ENCODE measurements at regions of chr6 and their contacts with region 1.

Region 1: GRCh38 chr6:84227434-84228197 is at the start of gene CEP162:
- DNase-seq: peak; percentile 93
- ATAC-seq: peak; percentile 96
- H3K4me3 Mint-ChIP-seq: peak within 1 kb of the TSS; percentile 84
- H3K27ac Mint-ChIP-seq: peak within 1 kb of the TSS; percentile 92
- H3K4me1 Mint-ChIP-seq: peaks cover 12% of the 10 kb centered on the region
- H3K27me3 Mint-ChIP-seq: peaks cover 5% of the 10 kb centered on the region
- total RNA-seq, gene CEP162: 7.2 to 7.3 TPM

Region 2: GRCh38 chr6:82247634-82248232 is 1979.9 kb before region 1 on chr6 and contains the start of gene IBTK:
- CTCF ChIA-PET with region 1: no interaction called
- POLR2A ChIA-PET with region 1: no interaction called
- intact Hi-C with region 1: loop called in 1 of 2 experiments (anchors 5 kb)
- DNase-seq: peak; percentile 92
- ATAC-seq: peak; percentile 87
- H3K4me3 Mint-ChIP-seq: peak within 1 kb of the TSS; percentile 97
- H3K27ac Mint-ChIP-seq: peak within 1 kb of the TSS; percentile 93
- H3K4me1 Mint-ChIP-seq: peaks cover 34% of the 10 kb centered on the region
- H3K27me3 Mint-ChIP-seq: no peaks in the 10 kb centered on the region
- total RNA-seq, gene IBTK: 28.6 to 29.5 TPM

Region 3: GRCh38 chr6:83292900-83293843 is 934.4 kb before region 1 on chr6:
- CTCF ChIA-PET with region 1: no interaction called
- POLR2A ChIA-PET with region 1: no interaction called
- intact Hi-C with region 1: no loop called
- DNase-seq: no peak
- ATAC-seq: peak; percentile 90
- H3K4me3 Mint-ChIP-seq: no peak overlapping the region
- H3K27ac Mint-ChIP-seq: no peak overlapping the region
- H3K4me1 Mint-ChIP-seq: peaks cover 11% of the 10 kb centered on the region
- H3K27me3 Mint-ChIP-seq: peaks cover 46% of the 10 kb centered on the region

Region 4: GRCh38 chr6:83615025-83615999 is 612.3 kb before region 1 on chr6:
- CTCF ChIA-PET with region 1: no interaction called
- POLR2A ChIA-PET with region 1: no interaction called
- intact Hi-C with region 1: loop called (anchors 5 to 10 kb)
- DNase-seq: no peak
- ATAC-seq: no peak
- H3K4me3 Mint-ChIP-seq: no peak overlapping the region
- H3K27ac Mint-ChIP-seq: no peak overlapping the region
- H3K4me1 Mint-ChIP-seq: no peaks in the 10 kb centered on the region
- H3K27me3 Mint-ChIP-seq: peaks cover 5% of the 10 kb centered on the region

Region 5: DNA sequence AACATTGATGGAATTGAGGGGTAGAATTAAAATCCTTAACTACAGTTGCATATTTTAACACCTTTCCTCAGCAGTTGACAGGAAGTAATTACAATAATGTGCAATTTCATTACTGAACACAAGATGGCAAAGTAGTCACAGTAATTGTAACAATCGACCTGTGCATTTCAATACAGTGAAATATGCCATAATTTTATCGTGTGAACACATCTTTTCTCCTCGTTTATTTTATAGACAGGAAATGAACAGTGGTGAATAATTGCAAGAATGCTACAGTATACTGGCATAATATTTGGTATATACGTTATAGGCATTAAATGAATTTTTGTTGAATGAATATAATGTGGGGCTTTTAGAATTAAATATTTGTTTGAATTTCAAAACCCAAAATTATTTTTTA is 343.1 kb before region 1 on chr6:
- CTCF ChIA-PET with region 1: interaction called, 7 read pairs
- POLR2A ChIA-PET with region 1: no interaction called
- intact Hi-C with region 1: loop called (anchors 2 kb)
- DNase-seq: no peak
- ATAC-seq: peak; percentile 74
- H3K4me3 Mint-ChIP-seq: no peak overlapping the region
- H3K27ac Mint-ChIP-seq: no peak overlapping the region
- H3K4me1 Mint-ChIP-seq: peaks cover 11% of the 10 kb centered on the region
- H3K27me3 Mint-ChIP-seq: no peaks in the 10 kb centered on the region

Region 6: DNA sequence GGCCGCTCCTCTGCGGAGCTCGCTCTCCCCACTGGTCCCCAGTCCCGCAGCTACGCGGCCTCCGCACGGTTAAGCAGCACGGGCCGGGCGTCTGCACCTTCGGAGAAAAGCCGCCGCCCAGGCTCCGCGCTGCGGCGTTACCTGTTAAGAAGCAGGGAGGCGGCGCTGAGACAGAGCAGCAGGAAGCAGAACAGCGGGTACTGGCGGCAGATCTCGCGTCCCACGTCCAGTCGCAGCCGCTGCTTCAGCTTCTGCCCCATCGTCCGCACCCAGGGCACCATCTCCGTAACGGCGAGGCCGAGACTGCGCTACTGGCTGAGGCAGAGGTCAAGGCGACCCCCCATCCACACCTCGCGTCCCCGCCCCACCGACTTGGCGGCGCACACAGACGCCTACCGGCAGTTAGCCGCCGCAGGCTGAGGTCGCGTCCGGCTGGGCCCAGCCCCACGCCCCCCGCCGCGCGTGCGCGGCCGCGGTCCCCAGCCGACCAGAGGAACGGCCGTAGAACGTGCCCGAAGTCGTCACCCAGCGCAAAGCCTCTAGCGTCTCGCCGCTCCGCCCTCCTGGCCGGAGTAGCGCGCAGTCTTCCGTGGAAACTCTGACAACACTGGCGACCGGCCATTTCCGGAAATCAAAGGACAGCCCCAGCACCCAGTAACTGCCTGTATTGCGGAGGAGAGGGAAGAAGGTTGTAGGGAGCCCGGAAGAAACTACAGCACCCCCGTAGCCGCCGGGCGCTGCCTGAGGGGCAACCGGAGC is 1366.0 kb after region 1 on chr6 and contains the start of gene SNX14:
- CTCF ChIA-PET with region 1: no interaction called
- POLR2A ChIA-PET with region 1: no interaction called
- intact Hi-C with region 1: loop called in 1 of 2 experiments (anchors 1 kb)
- DNase-seq: peak; percentile 87
- ATAC-seq: peak; percentile 81
- H3K4me3 Mint-ChIP-seq: peak within 1 kb of the TSS; percentile 83
- H3K27ac Mint-ChIP-seq: peak within 1 kb of the TSS; percentile 90
- H3K4me1 Mint-ChIP-seq: peaks cover 28% of the 10 kb centered on the region
- H3K27me3 Mint-ChIP-seq: no peaks in the 10 kb centered on the region
- total RNA-seq, gene SNX14: 38.4 to 54.7 TPM

Measured in activated CD4-positive, alpha-beta T cell treated with anti-CD3 and anti-CD28 coated beads for 36 hours (primary cell).